ENCODE measurements at regions of chr4 and their contacts with region 1.

Region 1: GRCh38 chr4:52721968-52722815 is 29.0 kb downstream of the ERVMER34-1 start:
- DNase-seq: peak; percentile 81
- ATAC-seq: peak; percentile 94
- H3K4me3 ChIP-seq: peak overlapping the region; percentile 51 to 61
- H3K27ac ChIP-seq: peak overlapping the region; percentile 34
- H3K4me1 ChIP-seq: peaks cover 0 to 14% of the 10 kb centered on the region in 2 experiments; a peak in 1 of 4 replicates
- H3K27me3 ChIP-seq: no peaks in the 10 kb centered on the region
- CTCF ChIP-seq: no peak
- POLR2A ChIP-seq: peak; percentile 59
- RAD21 ChIP-seq: no peak

Region 2: DNA sequence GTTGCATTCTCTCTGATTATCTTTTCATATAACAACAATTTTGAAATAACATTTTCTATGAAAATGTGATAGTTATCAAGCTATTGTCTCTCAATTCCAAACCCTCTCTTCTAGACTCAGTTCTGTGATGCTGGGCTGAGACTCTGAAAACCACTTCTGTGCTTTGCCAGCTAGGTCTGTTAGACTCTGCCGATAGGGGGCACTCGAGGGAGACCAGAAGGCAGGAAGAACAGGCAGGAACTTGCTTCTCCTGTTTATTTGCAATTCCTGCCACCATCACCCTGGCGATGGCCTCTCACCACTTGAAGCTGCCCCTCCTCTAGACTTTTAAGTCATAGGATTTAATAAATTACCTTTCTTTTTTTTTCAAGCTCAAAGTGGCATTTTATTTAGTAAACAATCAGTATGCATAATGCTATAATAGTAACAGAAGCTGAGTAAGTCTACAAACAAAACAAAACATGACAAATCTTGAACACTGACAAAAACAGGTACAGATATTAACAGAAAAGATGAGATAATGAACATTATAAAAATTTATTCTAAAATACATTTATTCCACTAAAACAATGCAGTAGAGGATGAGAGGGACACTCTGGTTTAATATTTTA is 189.6 kb after region 1 on chr4:
- CTCF ChIA-PET with region 1: no interaction called
- POLR2A ChIA-PET with region 1: interaction called, 11 read pairs
- RAD21 ChIA-PET with region 1: no interaction called
- intact Hi-C with region 1: no loop called
- DNase-seq: peak; percentile 77
- ATAC-seq: peak; percentile 94
- H3K4me3 ChIP-seq: no peak overlapping the region
- H3K27ac ChIP-seq: no peak overlapping the region
- H3K4me1 ChIP-seq: 0 out of 4 replicates have a peak, but pooled peaks cover 0 to 3% of the 10 kb centered on the region in 2 experiments
- H3K27me3 ChIP-seq: no peaks in the 10 kb centered on the region
- CTCF ChIP-seq: peak; percentile 41 to 97 (median 90); a peak in 5 of 6 replicates
- POLR2A ChIP-seq: no peak
- RAD21 ChIP-seq: peak; percentile 40

Measured in HCT116 (cell line).